B cell (primary cell): ENCODE measurements at regions of chr20 and their contacts with region 1.

Region 1: DNA sequence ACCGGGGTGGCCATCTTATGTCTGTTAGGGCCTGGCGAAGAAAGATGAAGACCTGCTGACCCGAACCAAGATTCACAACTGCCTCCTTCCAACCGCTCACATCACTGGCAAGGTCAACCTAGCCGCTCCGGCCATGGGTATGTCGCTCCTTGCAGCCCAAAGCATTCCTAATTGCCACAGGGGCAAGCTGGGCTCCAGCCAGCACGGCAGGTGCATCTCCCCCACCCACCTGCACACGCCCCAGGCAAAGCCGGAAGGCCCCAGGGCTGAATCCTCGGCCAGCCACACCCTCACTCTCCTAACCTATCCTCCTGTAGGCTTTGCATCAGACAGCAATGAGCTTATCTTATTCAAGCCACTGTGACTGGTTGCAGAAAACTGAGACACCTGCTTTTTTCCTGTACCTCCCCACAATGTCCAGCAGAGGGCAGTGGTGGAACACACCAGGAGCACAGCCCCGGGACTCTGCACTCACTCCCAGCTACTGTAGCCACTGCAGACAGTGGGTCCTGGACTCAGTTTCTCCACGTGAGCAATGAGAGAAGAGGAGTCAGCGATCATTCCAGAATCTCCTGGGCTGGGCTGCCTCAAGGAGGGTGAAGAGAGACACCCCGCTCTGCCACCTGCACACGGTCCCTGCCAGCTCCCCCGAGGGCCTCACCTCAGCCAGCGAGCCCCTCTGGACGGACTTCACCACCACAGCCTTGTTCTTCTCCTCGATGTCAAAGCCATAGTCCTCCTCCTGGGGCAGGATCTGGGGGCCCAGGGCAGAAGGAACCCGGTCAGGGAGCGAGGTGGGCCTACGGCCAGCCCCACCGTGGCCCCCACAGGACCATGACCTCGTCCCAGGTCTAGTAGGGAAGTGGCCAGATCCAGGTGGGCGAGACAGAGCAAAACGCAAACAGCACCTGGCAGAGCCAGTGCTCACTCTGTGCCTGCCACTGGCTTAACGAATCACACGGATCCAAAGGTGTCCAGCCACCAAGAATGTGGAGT is 170.0 kb downstream of the PREX1 start:
- DNase-seq: peak; percentile 82
- ATAC-seq: peak; percentile 93
- H3K4me3 ChIP-seq: no peak overlapping the region
- H3K4me3 Mint-ChIP-seq: no peak overlapping the region
- H3K27ac ChIP-seq: no peak overlapping the region
- H3K27ac Mint-ChIP-seq: peak overlapping the region; percentile 39
- H3K4me1 ChIP-seq: peaks cover 0 to 3% of the 10 kb centered on the region in 2 donors
- H3K4me1 Mint-ChIP-seq: peaks cover 10% of the 10 kb centered on the region
- H3K27me3 ChIP-seq: no peaks in the 10 kb centered on the region
- H3K27me3 Mint-ChIP-seq: no peaks in the 10 kb centered on the region
- CTCF ChIP-seq: peak; percentile 96

Region 2: GRCh38 chr20:48706173-48707015 is 48.6 kb after region 1 on chr20:
- CTCF ChIA-PET with region 1: interaction called, 13 read pairs
- POLR2A ChIA-PET with region 1: no interaction called
- intact Hi-C with region 1: no loop called
- DNase-seq: no peak
- ATAC-seq: no peak
- H3K4me3 ChIP-seq: no peak overlapping the region
- H3K4me3 Mint-ChIP-seq: no peak overlapping the region
- H3K27ac ChIP-seq: no peak overlapping the region
- H3K27ac Mint-ChIP-seq: no peak overlapping the region
- H3K4me1 ChIP-seq: peaks cover 7 to 43% of the 10 kb centered on the region in 2 donors
- H3K4me1 Mint-ChIP-seq: peaks cover 40% of the 10 kb centered on the region
- H3K27me3 ChIP-seq: no peaks in the 10 kb centered on the region
- H3K27me3 Mint-ChIP-seq: no peaks in the 10 kb centered on the region
- CTCF ChIP-seq: no peak

Region 3: GRCh38 chr20:48722737-48723191 is 65.0 kb after region 1 on chr20:
- CTCF ChIA-PET with region 1: interaction called, 12 read pairs
- POLR2A ChIA-PET with region 1: no interaction called
- intact Hi-C with region 1: no loop called
- DNase-seq: peak; percentile 58
- ATAC-seq: peak; percentile 55
- H3K4me3 ChIP-seq: peak overlapping the region in 1 of 5 experiments; percentile 21
- H3K4me3 Mint-ChIP-seq: peak overlapping the region; percentile 75
- H3K27ac ChIP-seq: peak overlapping the region; percentile 57 to 80
- H3K27ac Mint-ChIP-seq: peak overlapping the region; percentile 84
- H3K4me1 ChIP-seq: peaks cover 66 to 69% of the 10 kb centered on the region in 2 donors
- H3K4me1 Mint-ChIP-seq: peaks cover 73% of the 10 kb centered on the region
- H3K27me3 ChIP-seq: no peaks in the 10 kb centered on the region
- H3K27me3 Mint-ChIP-seq: no peaks in the 10 kb centered on the region
- CTCF ChIP-seq: no peak

Region 4: DNA sequence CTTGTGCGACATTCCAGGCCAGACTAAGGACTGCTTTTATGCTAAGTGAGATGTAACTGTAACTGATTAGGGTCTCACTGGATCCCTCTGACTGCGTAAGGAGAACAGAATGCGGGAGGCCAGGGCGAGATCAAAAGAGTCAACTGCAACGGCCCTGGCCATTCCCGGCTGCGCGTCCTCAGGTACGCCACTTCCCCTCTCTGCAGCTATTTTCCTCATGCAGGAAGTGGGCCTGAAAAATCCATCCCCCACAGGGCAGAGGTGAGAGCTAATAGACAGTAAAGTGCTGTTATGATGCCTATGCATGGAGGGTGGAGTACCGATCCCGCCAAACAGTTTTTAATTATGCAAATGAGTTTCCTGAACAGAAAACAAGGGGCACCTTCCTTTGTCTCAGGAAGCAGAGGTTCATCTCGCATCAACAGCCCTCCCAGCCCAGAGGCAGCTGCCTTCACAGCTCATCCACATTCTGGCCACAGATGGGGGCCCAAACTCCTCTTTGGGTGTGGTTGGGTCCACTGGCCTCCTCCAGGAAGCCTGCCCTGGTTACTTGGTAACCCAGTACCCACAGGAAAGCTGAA is 160.7 kb after region 1 on chr20:
- CTCF ChIA-PET with region 1: interaction called, 13 read pairs
- POLR2A ChIA-PET with region 1: interaction called, 3 read pairs
- intact Hi-C with region 1: no loop called
- DNase-seq: peak; percentile 76
- ATAC-seq: peak; percentile 77
- H3K4me3 ChIP-seq: peak overlapping the region; percentile 1 to 38 (median 28)
- H3K4me3 Mint-ChIP-seq: peak overlapping the region; percentile 92
- H3K27ac ChIP-seq: peak overlapping the region; percentile 63 to 84
- H3K27ac Mint-ChIP-seq: peak overlapping the region; percentile 88
- H3K4me1 ChIP-seq: peaks cover 93 to 97% of the 10 kb centered on the region in 2 donors
- H3K4me1 Mint-ChIP-seq: no peaks in the 10 kb centered on the region
- H3K27me3 ChIP-seq: no peaks in the 10 kb centered on the region
- H3K27me3 Mint-ChIP-seq: no peaks in the 10 kb centered on the region
- CTCF ChIP-seq: no peak

Region 5: GRCh38 chr20:48846498-48847485 is 189.0 kb after region 1 on chr20:
- CTCF ChIA-PET with region 1: interaction called, 10 read pairs
- POLR2A ChIA-PET with region 1: no interaction called
- intact Hi-C with region 1: no loop called
- DNase-seq: peak; percentile 67
- ATAC-seq: peak; percentile 95
- H3K4me3 ChIP-seq: no peak overlapping the region
- H3K4me3 Mint-ChIP-seq: peak overlapping the region; percentile 64
- H3K27ac ChIP-seq: no peak overlapping the region
- H3K27ac Mint-ChIP-seq: peak overlapping the region; percentile 74
- H3K4me1 ChIP-seq: peaks cover 24 to 25% of the 10 kb centered on the region in 2 donors
- H3K4me1 Mint-ChIP-seq: peaks cover 41% of the 10 kb centered on the region
- H3K27me3 ChIP-seq: no peaks in the 10 kb centered on the region
- H3K27me3 Mint-ChIP-seq: no peaks in the 10 kb centered on the region
- CTCF ChIP-seq: no peak

Region 6: DNA sequence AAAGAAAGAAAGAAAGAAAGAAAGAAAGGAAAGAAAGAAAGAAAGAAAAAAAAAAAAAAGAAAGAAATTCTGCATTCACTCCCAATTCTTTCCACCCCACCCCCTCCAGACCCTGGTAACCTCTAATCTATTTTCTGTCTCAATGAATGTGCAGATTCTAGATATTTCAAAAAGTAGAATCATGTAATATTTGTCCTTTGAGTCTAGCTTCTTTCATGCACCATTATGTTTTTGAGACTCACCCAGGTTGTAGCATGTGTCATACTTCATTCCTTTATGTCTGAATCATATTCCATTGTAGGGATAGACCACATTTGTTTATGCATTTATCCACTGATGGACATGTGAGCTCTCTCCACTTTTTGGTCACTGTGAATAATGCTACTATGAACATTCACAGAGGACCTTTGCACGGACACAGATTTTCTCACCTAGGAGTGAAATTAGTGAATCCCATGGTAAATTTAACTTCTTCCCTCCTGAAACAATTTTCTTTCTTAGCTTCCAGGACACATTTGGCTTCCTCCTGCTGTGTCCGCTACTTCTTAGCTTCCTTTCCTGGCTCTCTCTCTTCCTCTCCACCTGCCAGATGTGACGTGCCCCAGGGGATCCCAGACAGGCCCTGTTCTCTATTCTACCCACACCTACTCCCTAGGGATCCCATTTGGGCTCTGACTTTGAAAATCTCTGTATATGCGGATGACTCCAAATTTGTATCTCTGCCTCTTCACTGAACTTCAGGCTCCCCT is 239.6 kb after region 1 on chr20:
- CTCF ChIA-PET with region 1: interaction called, 16 read pairs
- POLR2A ChIA-PET with region 1: no interaction called
- intact Hi-C with region 1: no loop called
- DNase-seq: peak; percentile 45
- ATAC-seq: peak; percentile 67
- H3K4me3 ChIP-seq: no peak overlapping the region
- H3K4me3 Mint-ChIP-seq: peak overlapping the region; percentile 23
- H3K27ac ChIP-seq: no peak overlapping the region
- H3K27ac Mint-ChIP-seq: no peak overlapping the region
- H3K4me1 ChIP-seq: peaks cover 11 to 13% of the 10 kb centered on the region in 2 donors
- H3K4me1 Mint-ChIP-seq: peaks cover 23% of the 10 kb centered on the region
- H3K27me3 ChIP-seq: no peaks in the 10 kb centered on the region
- H3K27me3 Mint-ChIP-seq: no peaks in the 10 kb centered on the region
- CTCF ChIP-seq: no peak